HEK293 (cell line): ENCODE measurements at regions of chr15 and their contacts with region 1.

Region 1: DNA sequence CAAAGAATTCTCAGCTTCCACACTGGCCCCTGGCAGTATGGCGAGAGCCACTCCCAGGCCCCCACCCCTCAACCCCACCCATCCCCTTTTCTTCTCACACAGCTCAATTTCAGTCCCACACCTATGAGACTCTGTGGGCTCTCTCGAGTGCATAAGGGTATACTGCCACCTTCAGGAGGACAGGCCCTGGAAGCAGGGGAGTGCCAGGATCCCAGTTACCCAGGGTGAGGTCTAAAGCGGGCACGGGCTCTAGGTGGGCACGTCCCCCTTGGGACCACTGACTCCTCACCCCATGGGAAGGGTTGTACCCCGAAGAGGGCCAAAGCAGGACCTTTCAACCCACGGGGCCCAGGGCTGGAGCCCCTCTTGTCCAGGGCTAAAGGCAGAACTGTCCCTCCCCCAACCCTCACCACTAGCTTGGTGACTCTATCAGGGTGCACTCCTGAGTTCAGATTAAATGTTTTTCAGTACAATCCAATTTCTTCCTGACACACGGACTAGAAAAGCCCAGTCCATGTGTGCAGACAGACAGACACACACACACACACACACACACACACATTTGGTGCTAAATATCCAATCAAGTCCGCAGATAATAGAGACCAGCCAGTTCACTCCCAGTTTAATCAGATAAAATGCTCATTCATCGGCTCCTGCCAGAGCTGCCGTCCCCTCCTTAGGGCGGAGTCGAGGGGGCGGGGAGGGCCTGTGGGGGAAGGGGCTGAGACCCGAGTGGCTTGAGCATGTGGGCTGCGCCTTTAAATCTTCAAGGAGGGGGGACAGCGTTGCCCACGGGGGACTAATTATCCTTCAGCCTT is 59.4 kb downstream of the CYP11A1 start:
- H3K4me3 ChIP-seq: no peak overlapping the region
- H3K27ac ChIP-seq: no peak overlapping the region
- H3K4me1 ChIP-seq: peaks cover 10% of the 10 kb centered on the region
- CTCF ChIP-seq: peak; percentile 55

Region 2: DNA sequence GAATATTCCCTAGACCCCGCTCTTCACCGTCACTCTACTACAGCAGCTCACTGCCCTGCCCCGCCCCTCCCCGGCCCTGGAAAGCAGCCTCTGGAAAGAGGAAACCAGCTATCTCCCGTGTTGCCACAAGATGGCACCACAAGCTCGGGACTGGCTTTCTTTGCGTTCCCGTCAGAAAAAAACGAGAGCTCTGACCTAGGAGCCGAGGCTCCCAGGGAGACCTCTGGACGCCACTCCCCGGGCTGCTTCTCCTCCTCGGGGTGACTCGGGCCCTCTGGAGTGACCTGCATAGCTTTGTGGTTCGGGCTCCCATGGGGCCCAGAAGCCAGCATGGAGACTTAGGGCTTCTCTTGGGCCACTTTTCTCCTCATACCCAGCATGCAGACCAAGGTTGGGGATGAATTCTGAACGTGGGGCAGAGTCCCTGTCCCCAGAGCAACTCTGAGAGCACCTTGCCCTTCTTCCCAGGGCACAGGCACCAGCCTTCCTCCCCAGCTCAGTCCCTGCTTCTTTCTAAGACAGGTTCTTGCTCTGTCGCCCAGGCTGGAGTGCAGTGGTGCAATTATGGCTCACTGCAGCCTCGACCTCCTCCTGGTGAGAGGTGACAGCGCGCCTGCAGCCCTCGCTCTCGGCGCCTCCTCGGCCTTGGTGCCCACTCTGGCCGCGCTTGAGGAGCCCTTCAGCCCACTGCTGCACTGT is 334.9 kb before region 1 on chr15:
- CTCF ChIA-PET with region 1: interaction called, 30 read pairs
- POLR2A ChIA-PET with region 1: no interaction called
- H3K4me3 ChIP-seq: no peak overlapping the region
- H3K27ac ChIP-seq: no peak overlapping the region
- H3K4me1 ChIP-seq: no peaks in the 10 kb centered on the region; the same call in 1 of the 2 replicates
- CTCF ChIP-seq: peak; percentile 95

Region 3: GRCh38 chr15:74044267-74045110 is 263.5 kb before region 1 on chr15:
- CTCF ChIA-PET with region 1: interaction called, 30 read pairs
- POLR2A ChIA-PET with region 1: no interaction called
- H3K4me3 ChIP-seq: no peak overlapping the region
- H3K27ac ChIP-seq: no peak overlapping the region
- H3K4me1 ChIP-seq: no peaks in the 10 kb centered on the region; the same call in 1 of the 2 replicates
- CTCF ChIP-seq: no peak

Region 4: GRCh38 chr15:74127260-74127953 is 180.6 kb before region 1 on chr15:
- CTCF ChIA-PET with region 1: interaction called, 100 read pairs
- POLR2A ChIA-PET with region 1: interaction called, 3 read pairs
- H3K4me3 ChIP-seq: peak overlapping the region; percentile 25
- H3K27ac ChIP-seq: peak overlapping the region; percentile 1; the same call in 1 of the 2 replicates
- H3K4me1 ChIP-seq: peaks cover 14% of the 10 kb centered on the region
- CTCF ChIP-seq: peak; percentile 100

Region 5: DNA sequence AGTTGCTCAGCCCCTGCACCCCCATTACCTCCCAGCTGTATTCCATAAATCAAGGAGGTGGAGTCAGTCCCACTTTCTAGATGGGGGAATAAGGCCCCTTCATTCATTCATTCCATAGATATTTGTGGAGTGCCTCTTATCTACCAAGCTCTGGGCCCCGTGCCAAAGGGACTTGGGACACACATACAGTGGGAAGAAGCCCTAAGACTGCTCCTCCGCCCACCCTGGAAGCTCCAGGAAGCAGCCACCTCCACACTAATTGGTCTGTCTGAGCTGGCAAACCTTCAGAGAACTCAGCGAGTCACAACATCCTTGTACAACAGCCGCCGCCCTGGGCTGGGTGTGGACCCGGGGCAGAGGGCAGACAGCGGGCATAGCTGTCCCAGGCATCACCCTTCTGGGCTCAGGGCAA is 111.9 kb before region 1 on chr15:
- CTCF ChIA-PET with region 1: interaction called, 38 read pairs
- POLR2A ChIA-PET with region 1: no interaction called
- H3K4me3 ChIP-seq: no peak overlapping the region
- H3K27ac ChIP-seq: peak overlapping the region; percentile 61; the same call in 1 of the 2 replicates
- H3K4me1 ChIP-seq: peaks cover 31% of the 10 kb centered on the region
- CTCF ChIP-seq: no peak

Region 6: DNA sequence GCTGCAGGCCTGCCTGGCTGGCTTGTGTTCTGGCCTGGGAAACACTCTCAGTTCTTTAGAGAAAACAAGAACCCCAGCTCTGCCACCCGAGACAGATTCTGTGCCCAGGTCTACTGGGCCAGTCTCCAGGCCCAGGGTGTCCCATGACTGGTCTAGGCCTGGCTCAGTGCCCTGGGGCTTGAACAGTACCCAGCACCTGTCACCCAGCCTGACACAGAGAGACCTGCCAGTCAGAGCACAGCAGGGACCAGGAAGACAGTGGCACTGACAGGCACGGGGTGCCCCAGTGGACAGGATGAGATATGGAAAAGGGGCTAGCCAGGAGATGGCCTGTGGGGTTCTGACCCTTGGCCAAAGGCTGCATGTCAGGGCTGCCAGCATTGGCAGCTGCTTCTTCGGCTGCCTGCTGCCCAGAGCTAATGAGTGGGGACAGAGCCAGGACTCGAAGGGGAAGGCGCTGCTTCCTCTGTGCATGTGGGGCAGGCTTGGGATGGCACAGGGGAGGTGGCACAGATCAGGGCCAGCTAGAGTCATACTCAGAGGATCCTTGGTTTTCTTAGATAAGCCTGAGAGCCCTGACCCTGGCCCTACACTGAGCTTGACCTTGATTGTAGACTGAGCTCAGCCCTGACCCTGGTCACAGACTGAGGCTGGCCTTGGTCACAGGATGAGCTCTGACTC is 56.8 kb before region 1 on chr15:
- CTCF ChIA-PET with region 1: interaction called, 14 read pairs
- POLR2A ChIA-PET with region 1: no interaction called
- H3K4me3 ChIP-seq: no peak overlapping the region
- H3K27ac ChIP-seq: no peak overlapping the region
- H3K4me1 ChIP-seq: no peaks in the 10 kb centered on the region
- CTCF ChIP-seq: no peak

Region 7: DNA sequence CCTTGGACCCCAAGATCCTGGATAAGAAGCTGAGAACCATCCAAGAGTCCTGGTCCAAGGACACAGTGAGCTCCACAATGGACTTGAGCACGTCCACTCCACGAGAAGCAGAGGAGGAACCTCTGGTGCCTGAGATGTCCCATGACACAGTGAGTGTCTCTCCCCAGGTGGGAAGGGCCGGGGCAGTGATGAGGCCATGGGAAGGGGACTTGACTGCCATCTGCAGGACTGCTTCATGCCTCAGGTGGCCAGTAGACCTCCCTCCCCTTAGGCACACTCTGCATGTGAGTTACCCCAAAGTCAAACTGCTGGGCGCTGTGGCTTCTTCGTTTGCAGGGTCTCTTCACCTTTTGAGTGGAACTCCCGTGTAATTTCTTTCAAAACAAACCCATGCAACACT is 12.2 kb before region 1 on chr15:
- CTCF ChIA-PET with region 1: interaction called, 20 read pairs
- POLR2A ChIA-PET with region 1: no interaction called
- H3K4me3 ChIP-seq: no peak overlapping the region
- H3K27ac ChIP-seq: no peak overlapping the region
- H3K4me1 ChIP-seq: no peaks in the 10 kb centered on the region
- CTCF ChIP-seq: no peak

Region 8: GRCh38 chr15:74716644-74717043 is 408.6 kb after region 1 on chr15:
- CTCF ChIA-PET with region 1: no interaction called
- POLR2A ChIA-PET with region 1: no interaction called
- H3K4me3 ChIP-seq: no peak overlapping the region
- H3K27ac ChIP-seq: no peak overlapping the region
- H3K4me1 ChIP-seq: no peaks in the 10 kb centered on the region
- CTCF ChIP-seq: no peak